Activated B cell treated with CpG ODN at 0.5 μM for 24 hours (primary cell): ENCODE measurements at regions of chr16 and their contacts with region 1.

Region 1: DNA sequence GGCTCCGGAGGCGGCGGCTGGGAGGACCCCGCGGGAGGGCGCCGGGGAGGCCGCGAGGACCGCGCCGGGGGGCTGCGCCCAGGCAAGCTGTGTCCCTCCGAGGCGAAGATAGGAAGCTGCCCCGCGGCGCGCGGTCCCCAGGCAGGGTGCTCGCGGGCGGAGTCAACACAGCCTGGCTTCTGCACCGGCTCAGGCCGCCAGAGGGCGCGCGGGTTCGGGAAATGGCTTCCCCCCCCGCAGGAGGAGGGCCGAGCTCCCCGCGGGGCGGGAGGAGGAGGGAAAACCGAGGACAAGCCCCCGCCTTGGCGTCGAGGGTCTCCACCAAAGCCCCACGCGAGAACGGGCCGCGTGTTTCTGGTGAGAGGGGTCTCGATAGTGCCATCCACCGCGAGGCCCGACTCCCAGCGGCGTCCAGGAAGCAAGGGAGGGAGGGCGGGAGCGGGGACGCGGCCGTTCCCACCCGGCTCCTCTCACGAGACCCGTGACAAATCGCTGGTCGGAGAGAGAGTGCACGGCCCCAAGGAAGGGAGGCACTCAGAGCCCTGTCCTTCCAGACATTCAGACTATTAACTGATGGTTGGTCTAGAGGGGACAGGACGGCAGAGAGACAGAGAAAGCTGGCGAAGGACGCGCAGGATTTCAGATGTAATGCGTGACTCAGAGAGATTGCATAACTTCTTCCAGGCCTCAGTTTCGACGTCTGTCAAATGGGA is 64.4 kb upstream of the DNAJA2 start:
- DNase-seq: peak; percentile 94
- ATAC-seq: peak; percentile 96
- H3K4me3 Mint-ChIP-seq: peak overlapping the region; percentile 81
- H3K27ac Mint-ChIP-seq: no peak overlapping the region
- H3K4me1 Mint-ChIP-seq: peaks cover 19% of the 10 kb centered on the region
- H3K27me3 Mint-ChIP-seq: peaks cover 2% of the 10 kb centered on the region
- CTCF ChIP-seq: peak; percentile 99

Region 2: DNA sequence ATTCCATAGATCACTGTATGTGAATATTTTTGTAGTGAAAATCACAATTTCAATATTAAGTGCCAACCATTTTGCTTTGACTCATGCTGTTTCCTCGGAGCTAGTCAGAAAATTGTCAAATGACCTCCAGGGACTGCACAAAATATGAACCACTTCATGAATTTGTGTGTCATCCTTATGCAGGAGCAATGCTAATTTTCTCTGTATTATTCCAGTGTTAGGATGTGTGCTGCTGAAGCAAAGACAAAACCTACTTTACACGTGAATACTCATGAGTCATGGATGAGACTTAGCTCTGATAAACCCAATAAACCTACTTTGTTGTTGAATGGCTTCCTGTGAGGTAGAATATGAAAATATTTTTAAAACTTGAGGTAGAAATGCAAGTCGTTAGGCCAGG is 482.0 kb before region 1 on chr16:
- CTCF ChIA-PET with region 1: no interaction called
- POLR2A ChIA-PET with region 1: no interaction called
- intact Hi-C with region 1: no loop called
- DNase-seq: no peak
- ATAC-seq: no peak
- H3K4me3 Mint-ChIP-seq: no peak overlapping the region
- H3K27ac Mint-ChIP-seq: no peak overlapping the region
- H3K4me1 Mint-ChIP-seq: no peaks in the 10 kb centered on the region
- H3K27me3 Mint-ChIP-seq: peaks cover 7% of the 10 kb centered on the region
- CTCF ChIP-seq: no peak

Region 3: DNA sequence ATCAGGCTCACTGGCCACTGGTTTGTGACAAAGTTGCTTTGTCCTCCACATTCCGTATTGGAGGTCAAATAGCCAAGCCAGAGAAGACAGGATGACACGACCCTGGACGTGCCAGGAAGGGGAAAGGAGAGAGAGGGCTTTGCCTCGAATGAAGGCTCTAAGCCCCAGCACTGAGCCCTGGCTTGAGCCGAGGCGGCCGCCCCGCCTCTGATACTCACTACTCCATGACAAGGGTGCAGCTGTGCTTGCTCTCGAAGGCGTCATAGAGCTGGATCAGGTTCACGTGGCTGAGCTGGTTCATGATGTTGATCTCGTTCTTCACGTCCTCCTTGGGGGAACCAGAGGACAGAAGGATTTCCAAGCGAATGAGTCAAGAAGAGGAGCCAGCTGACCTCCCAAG is 309.1 kb before region 1 on chr16:
- CTCF ChIA-PET with region 1: no interaction called
- POLR2A ChIA-PET with region 1: no interaction called
- intact Hi-C with region 1: no loop called
- DNase-seq: no peak
- ATAC-seq: no peak
- H3K4me3 Mint-ChIP-seq: no peak overlapping the region
- H3K27ac Mint-ChIP-seq: no peak overlapping the region
- H3K4me1 Mint-ChIP-seq: no peaks in the 10 kb centered on the region
- H3K27me3 Mint-ChIP-seq: no peaks in the 10 kb centered on the region
- CTCF ChIP-seq: no peak

Region 4: DNA sequence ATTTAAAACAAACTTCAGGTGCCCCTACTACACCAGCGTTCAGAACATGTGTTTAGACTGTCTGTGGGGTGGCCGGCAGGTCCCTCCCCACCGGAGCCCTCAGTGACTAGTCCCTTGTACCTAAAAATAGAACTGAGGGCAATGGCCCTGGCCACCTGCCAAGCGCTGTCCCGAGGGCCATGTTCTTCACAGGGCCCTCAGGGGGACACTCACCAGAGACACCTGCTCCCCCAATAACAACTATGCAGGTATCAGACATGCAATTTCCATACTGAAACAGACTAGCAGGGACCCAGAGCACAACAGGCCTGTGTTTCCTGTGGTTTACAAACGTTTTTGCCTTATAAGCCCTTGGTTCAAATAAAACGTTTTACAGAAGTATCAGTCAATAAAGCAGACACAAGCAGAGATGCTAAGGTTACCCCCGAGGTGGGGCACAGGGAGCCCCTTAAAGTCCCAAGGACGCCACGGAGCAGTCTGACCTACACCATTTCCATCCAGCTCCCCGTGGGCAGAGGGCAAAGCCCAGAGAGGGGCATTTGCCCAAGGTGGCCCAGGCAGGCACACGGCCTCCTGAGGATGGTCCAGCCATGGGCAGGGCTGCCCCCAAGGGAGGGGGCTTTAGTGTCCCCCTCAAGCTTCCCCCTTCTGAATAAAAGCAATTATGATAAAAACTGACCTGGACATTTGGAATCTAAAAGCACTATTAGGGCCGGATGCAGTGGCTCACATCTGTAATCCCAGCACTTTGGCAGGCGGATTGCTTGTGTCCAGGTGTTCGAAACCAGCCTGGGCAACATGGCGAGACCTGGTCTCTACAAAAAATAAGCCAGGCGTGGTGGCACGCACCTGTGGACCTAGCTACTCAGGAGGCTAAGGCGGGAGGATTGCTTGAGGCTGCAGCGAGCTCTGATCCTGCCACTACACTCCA is 288.9 kb before region 1 on chr16:
- CTCF ChIA-PET with region 1: no interaction called
- POLR2A ChIA-PET with region 1: no interaction called
- intact Hi-C with region 1: no loop called
- DNase-seq: no peak
- ATAC-seq: no peak
- H3K4me3 Mint-ChIP-seq: no peak overlapping the region
- H3K27ac Mint-ChIP-seq: peak overlapping the region; percentile 35
- H3K4me1 Mint-ChIP-seq: peaks cover 13% of the 10 kb centered on the region
- H3K27me3 Mint-ChIP-seq: no peaks in the 10 kb centered on the region
- CTCF ChIP-seq: no peak

Region 5: GRCh38 chr16:46853713-46854443 is 184.0 kb before region 1 on chr16:
- CTCF ChIA-PET with region 1: interaction called, 3 read pairs
- POLR2A ChIA-PET with region 1: interaction called, 5 read pairs
- intact Hi-C with region 1: loop called (anchors 5 kb)
- DNase-seq: peak; percentile 53
- ATAC-seq: peak; percentile 72
- H3K4me3 Mint-ChIP-seq: no peak overlapping the region
- H3K27ac Mint-ChIP-seq: no peak overlapping the region
- H3K4me1 Mint-ChIP-seq: peaks cover 17% of the 10 kb centered on the region
- H3K27me3 Mint-ChIP-seq: no peaks in the 10 kb centered on the region
- CTCF ChIP-seq: peak; percentile 63

Region 6: DNA sequence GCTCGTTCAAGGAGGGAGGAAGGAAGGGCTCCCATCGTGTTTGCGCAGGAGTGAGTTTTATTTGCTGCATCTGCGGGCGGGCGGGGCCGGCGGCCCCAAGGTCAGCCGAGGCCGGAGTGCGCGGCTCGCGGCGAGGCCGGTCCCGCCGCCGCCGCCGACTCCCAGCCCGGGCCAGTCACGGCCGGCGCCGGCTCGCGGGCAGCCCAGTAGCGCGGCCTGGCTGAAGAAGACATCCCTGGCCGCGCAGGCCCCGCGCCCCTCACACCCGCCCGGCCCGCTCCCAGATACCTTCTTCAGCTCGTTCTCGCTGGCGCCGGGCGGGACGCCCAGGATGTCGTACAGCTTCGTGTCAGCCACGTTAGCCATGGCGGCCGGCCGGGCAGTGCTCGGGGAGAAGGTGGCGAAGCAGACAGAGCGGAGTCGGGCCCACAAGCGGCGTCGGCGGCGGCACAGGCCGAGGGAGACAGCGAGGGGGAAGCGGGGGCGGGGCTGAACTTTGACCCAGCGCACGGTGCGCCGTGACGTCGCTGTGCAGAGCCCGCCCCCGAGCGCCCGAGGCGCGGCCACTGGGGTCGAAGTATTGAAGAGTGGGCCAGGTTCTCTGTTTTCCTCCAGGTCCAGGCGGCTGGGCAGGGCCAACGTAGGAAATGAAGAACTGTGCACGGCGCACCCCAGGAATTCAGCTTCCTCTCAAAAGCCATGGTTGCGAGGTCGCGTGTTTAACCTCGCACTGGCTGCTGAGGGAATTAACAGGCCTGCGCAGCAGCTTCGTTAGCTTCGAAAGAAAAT is 64.5 kb before region 1 on chr16 and contains the start of gene DNAJA2:
- CTCF ChIA-PET with region 1: interaction called, 5 read pairs
- POLR2A ChIA-PET with region 1: interaction called, 18 read pairs
- intact Hi-C with region 1: loop called (anchors 1 kb)
- DNase-seq: peak; percentile 94
- ATAC-seq: peak; percentile 93
- H3K4me3 Mint-ChIP-seq: peak within 1 kb of the TSS; percentile 95
- H3K27ac Mint-ChIP-seq: peak within 1 kb of the TSS; percentile 98
- H3K4me1 Mint-ChIP-seq: peaks cover 44% of the 10 kb centered on the region
- H3K27me3 Mint-ChIP-seq: no peaks in the 10 kb centered on the region
- CTCF ChIP-seq: no peak
- total RNA-seq, gene DNAJA2: 54.4 and 57.1 TPM in 2 replicates

Region 7: GRCh38 chr16:47018223-47018891 is 19.5 kb before region 1 on chr16:
- CTCF ChIA-PET with region 1: interaction called, 19 read pairs
- POLR2A ChIA-PET with region 1: interaction called, 3 read pairs
- intact Hi-C with region 1: loop called (anchors 1 kb)
- DNase-seq: peak; percentile 39
- ATAC-seq: peak; percentile 98
- H3K4me3 Mint-ChIP-seq: peak overlapping the region; percentile 13
- H3K27ac Mint-ChIP-seq: peak overlapping the region; percentile 73
- H3K4me1 Mint-ChIP-seq: peaks cover 28% of the 10 kb centered on the region
- H3K27me3 Mint-ChIP-seq: no peaks in the 10 kb centered on the region
- CTCF ChIP-seq: no peak

Region 8: DNA sequence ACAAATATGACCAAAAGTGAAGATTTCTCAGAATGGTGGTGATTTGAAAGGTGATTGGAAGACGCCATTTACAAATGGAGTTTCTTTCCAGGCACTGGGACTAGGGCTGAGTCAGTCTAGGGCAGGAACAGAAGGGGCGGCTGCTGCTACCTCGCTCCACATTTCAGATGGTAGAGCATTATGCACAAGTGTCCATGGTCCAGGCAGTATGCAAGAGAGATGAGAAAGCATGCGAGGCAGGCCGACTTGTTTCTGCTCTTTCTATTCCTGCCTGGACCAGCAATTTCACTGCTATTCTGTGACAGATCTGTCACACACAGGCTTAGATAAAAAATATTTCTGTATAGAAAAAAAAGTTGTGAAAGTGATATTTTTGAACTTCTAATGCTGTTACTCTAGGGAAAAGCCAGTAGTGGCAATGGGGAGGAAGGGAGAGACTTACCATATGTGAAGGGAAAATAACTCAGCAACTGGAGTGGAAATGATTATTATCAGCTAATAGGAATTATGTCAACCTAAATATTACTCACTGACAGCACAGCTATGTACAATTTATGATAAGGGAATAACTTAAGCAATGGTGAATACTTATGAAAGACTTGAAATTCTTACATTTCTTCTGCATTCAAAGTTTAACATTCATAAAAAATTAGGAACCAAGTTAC is 240.5 kb after region 1 on chr16:
- CTCF ChIA-PET with region 1: no interaction called
- POLR2A ChIA-PET with region 1: no interaction called
- intact Hi-C with region 1: no loop called
- DNase-seq: no peak
- ATAC-seq: no peak
- H3K4me3 Mint-ChIP-seq: no peak overlapping the region
- H3K27ac Mint-ChIP-seq: no peak overlapping the region
- H3K4me1 Mint-ChIP-seq: no peaks in the 10 kb centered on the region
- H3K27me3 Mint-ChIP-seq: no peaks in the 10 kb centered on the region
- CTCF ChIP-seq: no peak

Region 9: DNA sequence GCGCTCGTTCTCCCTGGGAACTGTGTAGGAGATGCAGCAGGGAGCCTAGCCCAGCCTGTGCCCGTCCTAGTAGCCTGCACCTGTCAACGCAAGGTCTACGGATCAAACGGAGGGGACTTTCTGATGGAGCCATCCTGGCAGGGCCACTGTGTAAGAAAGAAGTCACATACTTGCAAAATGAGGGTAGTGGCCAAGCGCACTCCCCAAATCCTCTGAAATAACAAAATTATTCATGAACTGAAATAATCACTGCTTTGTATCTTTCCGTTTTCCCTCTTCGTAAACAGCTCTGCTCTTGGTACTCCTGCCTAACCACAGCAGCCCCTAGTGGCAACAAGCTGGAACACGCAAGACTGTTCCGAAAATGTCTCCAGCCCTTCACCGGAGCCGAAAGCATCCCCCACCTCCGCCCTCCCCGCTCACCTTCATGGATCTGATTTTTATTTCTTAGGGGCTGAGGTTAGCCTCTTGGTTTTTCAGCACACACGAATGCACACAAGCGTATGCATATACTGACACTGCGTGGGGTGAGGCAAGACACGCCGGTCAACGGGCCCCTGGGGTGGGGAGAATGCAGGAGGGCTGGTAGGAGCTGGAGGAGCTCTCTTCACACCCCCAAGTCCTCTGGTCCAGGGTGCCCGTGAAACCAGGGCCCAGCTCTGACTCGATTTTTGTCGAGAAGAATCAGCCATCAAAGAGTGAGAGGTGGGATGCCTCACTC is 1017.1 kb after region 1 on chr16:
- CTCF ChIA-PET with region 1: interaction called, 7 read pairs
- POLR2A ChIA-PET with region 1: interaction called, 3 read pairs
- intact Hi-C with region 1: loop called (anchors 2 kb)
- DNase-seq: no peak
- ATAC-seq: no peak
- H3K4me3 Mint-ChIP-seq: no peak overlapping the region
- H3K27ac Mint-ChIP-seq: no peak overlapping the region
- H3K4me1 Mint-ChIP-seq: peaks cover 4% of the 10 kb centered on the region
- H3K27me3 Mint-ChIP-seq: peaks cover 19% of the 10 kb centered on the region
- CTCF ChIP-seq: no peak

Region 10: GRCh38 chr16:48164907-48165726 is 1127.2 kb after region 1 on chr16:
- CTCF ChIA-PET with region 1: interaction called, 34 read pairs
- POLR2A ChIA-PET with region 1: no interaction called
- intact Hi-C with region 1: loop called (anchors 1 kb)
- DNase-seq: peak; percentile 60
- ATAC-seq: peak; percentile 89
- H3K4me3 Mint-ChIP-seq: no peak overlapping the region
- H3K27ac Mint-ChIP-seq: no peak overlapping the region
- H3K4me1 Mint-ChIP-seq: peaks cover 4% of the 10 kb centered on the region
- H3K27me3 Mint-ChIP-seq: peaks cover 4% of the 10 kb centered on the region
- CTCF ChIP-seq: no peak